ENCODE measurements at regions of chr4 and their contacts with region 1.

Region 1: DNA sequence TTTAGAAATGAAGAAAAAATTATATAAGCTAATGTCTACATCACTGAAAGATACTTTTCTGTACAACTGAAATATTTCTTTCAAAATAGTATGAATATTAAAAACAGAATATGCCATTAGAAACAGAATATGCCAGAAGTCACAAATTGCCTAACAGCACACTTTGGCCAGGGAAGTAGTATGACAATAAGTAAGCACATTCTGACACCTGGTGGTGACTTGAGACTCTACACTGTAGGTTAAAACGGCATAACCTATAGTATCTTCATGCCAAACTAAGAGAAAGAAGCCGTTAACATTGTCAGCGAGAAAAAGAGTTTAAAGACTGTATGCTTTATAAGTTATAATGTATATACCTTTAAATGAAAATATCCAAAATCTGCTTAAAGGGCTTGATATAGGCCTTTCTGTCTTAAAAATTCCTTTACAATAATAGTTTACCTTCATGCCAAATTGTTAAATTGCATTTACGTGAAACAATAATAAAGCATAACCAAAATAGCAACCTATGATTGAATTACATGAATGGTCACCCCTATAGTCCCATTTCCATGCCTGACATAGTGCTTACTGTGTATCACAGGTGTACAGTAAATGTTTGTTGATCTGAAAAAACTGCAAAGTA is 32.8 kb downstream of the FAM13A start:
- DNase-seq: peak; percentile 4
- H3K4me3 ChIP-seq: no peak overlapping the region
- H3K27me3 ChIP-seq: no peaks in the 10 kb centered on the region
- CTCF ChIP-seq: peak; percentile 64

Region 2: DNA sequence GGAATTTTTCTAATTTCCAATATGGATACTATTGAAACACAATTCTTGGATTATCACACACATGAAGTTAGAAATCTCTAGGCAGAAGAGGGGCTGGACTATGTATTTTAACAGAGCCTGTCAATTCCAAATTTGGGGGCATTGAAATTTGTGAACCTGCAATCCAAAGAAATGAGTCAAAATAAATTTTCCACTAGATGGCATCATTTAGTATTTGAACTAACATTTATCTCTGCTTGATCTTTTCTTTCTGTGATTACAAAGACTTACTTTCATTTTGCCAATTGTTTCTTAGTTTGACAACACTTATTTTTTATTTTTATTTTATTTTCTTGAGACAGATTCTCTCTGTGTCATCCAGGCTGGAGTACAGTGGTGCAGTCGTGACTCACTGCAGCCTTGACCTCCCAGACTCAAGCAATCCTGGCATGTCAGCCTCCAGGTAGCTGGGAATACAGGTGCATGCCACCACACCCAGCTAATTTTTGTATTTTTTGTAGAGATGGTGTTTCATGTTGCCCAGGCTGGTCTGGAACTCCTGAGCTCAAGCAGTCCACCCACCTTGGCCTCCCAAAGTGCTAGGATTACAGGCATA is 497.8 kb before region 1 on chr4:
- CTCF ChIA-PET with region 1: interaction called, 19 read pairs
- POLR2A ChIA-PET with region 1: no interaction called
- DNase-seq: no peak
- H3K4me3 ChIP-seq: no peak overlapping the region
- H3K27me3 ChIP-seq: no peaks in the 10 kb centered on the region
- CTCF ChIP-seq: peak; percentile 27; the same call in 1 of the 2 replicates

Region 3: DNA sequence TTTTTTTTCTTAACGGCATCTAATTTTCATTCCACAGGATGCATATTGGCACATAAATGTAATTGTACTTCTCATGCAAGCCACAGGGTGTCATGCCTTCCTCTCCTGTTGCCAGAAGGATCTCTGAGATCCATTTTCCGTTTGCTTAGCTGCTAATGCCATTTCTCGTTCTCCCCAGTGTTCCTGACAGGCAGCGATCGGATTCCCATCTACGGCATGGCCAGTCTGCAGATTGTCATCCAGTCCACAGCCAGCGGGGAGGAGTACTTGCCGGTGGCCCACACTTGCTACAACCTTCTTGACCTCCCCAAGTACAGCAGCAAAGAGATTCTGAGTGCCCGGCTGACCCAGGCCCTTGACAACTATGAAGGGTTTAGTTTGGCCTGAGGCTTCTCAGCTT is 317.6 kb before region 1 on chr4:
- CTCF ChIA-PET with region 1: interaction called, 42 read pairs
- POLR2A ChIA-PET with region 1: no interaction called
- DNase-seq: no peak
- H3K4me3 ChIP-seq: no peak overlapping the region
- H3K27me3 ChIP-seq: no peaks in the 10 kb centered on the region
- CTCF ChIP-seq: peak; percentile 68

Region 4: GRCh38 chr4:88818631-88819470 is 205.3 kb before region 1 on chr4:
- CTCF ChIA-PET with region 1: interaction called, 119 read pairs
- POLR2A ChIA-PET with region 1: no interaction called
- DNase-seq: no peak
- H3K4me3 ChIP-seq: no peak overlapping the region
- H3K27me3 ChIP-seq: no peaks in the 10 kb centered on the region
- CTCF ChIP-seq: peak; percentile 51